ENCODE measurements at regions of chr9 and their contacts with region 1.

Region 1: DNA sequence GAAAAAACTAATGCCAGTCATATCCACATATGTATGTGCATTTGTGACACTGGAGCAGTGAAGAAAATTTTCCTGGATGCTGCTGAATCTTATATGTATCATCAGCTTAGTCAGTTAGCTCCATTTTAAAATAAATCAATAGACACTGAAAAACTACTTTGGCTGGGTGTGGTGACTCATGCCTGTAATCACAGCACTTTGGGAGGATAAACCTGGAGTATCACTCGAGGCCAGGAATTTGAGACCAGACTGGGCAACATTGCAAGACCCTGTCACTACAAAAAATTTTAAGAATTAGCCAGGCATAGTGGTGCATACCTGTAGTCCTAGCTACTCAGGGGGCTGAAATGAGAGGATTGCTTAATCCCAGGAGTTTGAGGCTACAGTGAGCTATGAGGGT is 511.0 kb upstream of the TLE4 start:
- DNase-seq: no peak
- ATAC-seq: no peak
- H3K4me3 ChIP-seq: no peak overlapping the region
- H3K27ac ChIP-seq: no peak overlapping the region
- H3K4me1 ChIP-seq: no peaks in the 10 kb centered on the region
- H3K27me3 ChIP-seq: no peaks in the 10 kb centered on the region
- CTCF ChIP-seq: no peak

Region 2: DNA sequence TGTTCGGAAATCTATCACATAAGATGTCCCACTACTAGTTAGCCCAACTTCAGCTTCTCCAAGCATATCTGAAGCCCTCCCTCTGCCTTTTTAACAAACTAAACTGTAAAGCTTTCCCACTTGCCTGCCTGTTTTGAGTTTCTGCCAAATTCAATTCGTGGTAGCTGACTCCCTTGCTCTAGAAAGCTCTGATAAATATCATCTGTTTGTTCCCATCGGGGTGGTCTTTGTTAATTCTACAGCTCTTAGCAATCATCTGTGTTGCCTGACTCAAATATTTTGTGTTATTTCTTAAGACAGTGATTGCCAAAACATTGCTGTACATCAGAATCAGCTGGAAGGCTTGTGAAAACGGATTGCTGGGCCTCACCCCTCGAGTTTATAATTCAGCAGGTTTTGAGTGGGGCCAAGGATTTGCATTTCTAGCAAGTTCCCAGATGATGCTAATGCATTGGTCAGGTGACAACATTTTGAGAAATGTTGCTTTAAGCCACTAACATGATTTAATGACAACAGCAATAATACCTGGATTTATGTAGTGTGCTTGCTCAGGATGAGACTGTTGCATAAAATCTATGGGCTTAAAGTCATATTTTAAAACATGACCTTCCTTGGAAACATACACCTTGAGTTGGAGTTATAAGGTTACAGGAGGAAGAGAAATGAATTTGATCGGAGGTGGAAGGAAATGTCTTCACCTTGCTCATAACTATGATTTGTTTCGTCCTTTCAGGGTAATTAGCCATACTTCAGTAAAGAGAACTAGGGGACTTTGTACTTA is 132.0 kb before region 1 on chr9:
- intact Hi-C with region 1: loop called in 1 of 10 experiments (anchors 5 kb)
- DNase-seq: no peak
- ATAC-seq: no peak
- H3K4me3 ChIP-seq: no peak overlapping the region
- H3K27ac ChIP-seq: no peak overlapping the region
- H3K4me1 ChIP-seq: no peaks in the 10 kb centered on the region
- H3K27me3 ChIP-seq: no peaks in the 10 kb centered on the region
- CTCF ChIP-seq: no peak

Region 3: DNA sequence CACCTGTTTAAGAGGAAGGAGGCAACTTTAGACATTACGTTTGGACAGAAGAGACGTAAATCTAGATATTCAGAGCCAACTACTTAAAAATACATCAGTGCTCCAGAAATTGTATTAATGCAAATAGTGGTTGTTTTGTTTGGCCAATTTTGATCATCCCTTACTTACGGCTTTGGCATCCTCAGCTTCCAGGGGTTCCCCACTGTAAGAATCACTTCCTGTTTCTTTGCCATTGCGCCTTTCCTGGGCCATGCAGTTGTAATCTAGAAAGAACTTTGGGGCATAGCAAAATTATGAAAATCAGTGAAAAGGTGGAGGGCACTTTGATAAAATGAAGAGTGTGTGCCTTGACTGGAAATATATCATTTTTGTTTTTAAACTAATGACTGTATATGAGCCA is 26.2 kb before region 1 on chr9:
- intact Hi-C with region 1: no loop called
- DNase-seq: no peak
- ATAC-seq: no peak
- H3K4me3 ChIP-seq: no peak overlapping the region
- H3K27ac ChIP-seq: no peak overlapping the region
- H3K4me1 ChIP-seq: no peaks in the 10 kb centered on the region
- H3K27me3 ChIP-seq: no peaks in the 10 kb centered on the region
- CTCF ChIP-seq: no peak

Region 4: GRCh38 chr9:79089054-79089560 is 28.3 kb after region 1 on chr9:
- intact Hi-C with region 1: no loop called
- DNase-seq: no peak
- ATAC-seq: no peak
- H3K4me3 ChIP-seq: no peak overlapping the region
- H3K27ac ChIP-seq: no peak overlapping the region
- H3K4me1 ChIP-seq: no peaks in the 10 kb centered on the region
- H3K27me3 ChIP-seq: no peaks in the 10 kb centered on the region
- CTCF ChIP-seq: no peak

Measured in heart right ventricle (tissue), 16 donors.